ENCODE measurements at regions of chr6 and their contacts with region 1.

Region 1: DNA sequence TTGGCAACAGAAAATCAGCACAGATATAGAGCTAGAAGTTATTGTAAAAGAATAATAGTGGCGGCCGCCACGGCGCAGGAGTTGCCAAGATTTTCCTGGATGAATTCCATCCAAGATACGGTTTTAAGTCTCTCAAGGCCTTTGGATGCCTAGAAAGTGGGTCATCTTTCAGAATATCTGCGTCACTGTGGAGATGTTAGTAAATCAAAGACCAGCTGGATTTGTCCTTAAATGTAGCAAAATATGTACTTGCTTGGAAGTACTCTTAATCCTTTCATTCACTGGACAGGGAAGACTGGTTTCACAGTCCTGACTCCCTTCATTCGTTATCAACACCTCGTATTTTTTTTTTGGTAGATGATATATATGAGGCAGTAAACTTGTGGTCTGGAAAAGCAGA is 83.0 kb downstream of the SLC22A3 start:
- DNase-seq: peak; percentile 88
- H3K4me3 ChIP-seq: no peak overlapping the region
- H3K27ac ChIP-seq: peak overlapping the region; percentile 45 to 85 (median 74)
- H3K4me1 ChIP-seq: peaks cover 0 to 55% (median 49%) of the 10 kb centered on the region in 4 donors
- H3K27me3 ChIP-seq: no peaks in the 10 kb centered on the region
- CTCF ChIP-seq: no peak
- EP300 ChIP-seq: peak; percentile 69 to 95 (median 84)
- POLR2A ChIP-seq: no peak

Region 2: DNA sequence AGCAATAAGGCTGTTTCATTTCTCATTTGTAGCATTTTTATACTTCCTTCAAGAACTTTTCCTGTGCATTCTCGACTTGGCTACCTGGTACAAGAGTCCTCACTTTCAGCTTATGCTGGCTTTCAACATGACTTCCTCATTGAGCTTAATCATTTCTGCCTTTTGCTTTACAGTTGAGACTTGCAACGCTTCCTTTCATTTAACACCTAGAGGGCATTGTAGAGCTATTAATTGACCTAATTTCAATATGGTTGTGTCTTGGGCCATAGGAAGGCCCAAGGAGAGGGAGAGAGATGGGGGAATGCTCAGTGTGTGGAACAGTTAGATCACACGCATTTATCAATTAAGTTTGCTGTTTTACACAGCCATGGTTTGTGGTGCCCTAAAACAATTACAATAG is 209.8 kb before region 1 on chr6:
- intact Hi-C with region 1: loop called (anchors 10 kb)
- DNase-seq: no peak
- H3K4me3 ChIP-seq: no peak overlapping the region
- H3K27ac ChIP-seq: no peak overlapping the region
- H3K4me1 ChIP-seq: peaks cover 0 to 13% (median 6%) of the 10 kb centered on the region in 4 donors
- H3K27me3 ChIP-seq: no peaks in the 10 kb centered on the region
- CTCF ChIP-seq: peak in 2 of 4 experiments; percentile 12 to 18
- EP300 ChIP-seq: no peak
- POLR2A ChIP-seq: no peak

Region 3: DNA sequence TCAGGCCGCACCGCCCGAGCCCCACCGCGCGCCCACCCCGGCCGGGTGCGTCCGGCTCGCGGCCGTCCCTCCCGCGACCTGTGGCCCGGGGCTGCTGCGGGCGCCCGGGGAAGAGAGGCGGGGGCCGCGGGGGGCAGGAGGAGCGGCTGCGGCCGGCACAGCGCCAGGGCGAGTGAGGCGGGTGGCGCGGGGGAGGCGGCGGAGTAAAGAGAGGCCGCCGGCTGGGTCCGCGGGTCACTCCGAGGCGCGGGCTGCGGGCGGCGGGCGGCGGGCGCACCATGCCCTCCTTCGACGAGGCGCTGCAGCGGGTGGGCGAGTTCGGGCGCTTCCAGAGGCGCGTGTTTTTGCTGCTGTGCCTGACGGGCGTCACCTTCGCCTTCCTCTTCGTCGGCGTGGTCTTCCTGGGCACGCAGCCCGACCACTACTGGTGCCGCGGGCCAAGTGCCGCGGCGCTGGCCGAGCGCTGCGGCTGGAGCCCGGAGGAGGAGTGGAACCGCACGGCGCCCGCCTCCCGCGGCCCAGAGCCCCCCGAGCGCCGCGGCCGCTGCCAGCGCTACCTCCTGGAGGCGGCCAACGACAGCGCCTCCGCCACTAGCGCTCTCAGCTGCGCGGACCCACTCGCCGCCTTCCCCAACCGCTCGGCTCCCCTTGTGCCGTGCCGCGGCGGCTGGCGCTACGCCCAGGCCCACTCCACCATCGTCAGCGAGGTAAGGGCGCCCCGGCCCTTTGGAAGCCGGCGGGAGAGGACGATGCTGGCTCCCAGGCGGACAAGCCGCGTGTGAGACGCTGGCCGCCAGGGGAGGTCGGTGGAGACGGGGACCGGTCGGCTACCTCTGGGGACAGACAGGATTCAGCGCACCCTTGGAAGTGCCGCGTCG is 82.8 kb before region 1 on chr6 and contains the start of gene SLC22A3:
- intact Hi-C with region 1: loop called (anchors 5 kb)
- DNase-seq: peak; percentile 77
- H3K4me3 ChIP-seq: peak within 1 kb of the TSS; percentile 57 to 87 (median 74)
- H3K27ac ChIP-seq: peak within 1 kb of the TSS; percentile 81 to 89 (median 84)
- H3K4me1 ChIP-seq: peaks cover 0 to 29% (median 16%) of the 10 kb centered on the region in 4 donors
- H3K27me3 ChIP-seq: no peaks in the 10 kb centered on the region
- CTCF ChIP-seq: peak in 3 of 4 experiments; percentile 15 to 43 (median 42)
- EP300 ChIP-seq: no peak
- POLR2A ChIP-seq: no peak
- total RNA-seq, gene SLC22A3: 13.6 to 26.3 (median 19.3) TPM

Region 4: DNA sequence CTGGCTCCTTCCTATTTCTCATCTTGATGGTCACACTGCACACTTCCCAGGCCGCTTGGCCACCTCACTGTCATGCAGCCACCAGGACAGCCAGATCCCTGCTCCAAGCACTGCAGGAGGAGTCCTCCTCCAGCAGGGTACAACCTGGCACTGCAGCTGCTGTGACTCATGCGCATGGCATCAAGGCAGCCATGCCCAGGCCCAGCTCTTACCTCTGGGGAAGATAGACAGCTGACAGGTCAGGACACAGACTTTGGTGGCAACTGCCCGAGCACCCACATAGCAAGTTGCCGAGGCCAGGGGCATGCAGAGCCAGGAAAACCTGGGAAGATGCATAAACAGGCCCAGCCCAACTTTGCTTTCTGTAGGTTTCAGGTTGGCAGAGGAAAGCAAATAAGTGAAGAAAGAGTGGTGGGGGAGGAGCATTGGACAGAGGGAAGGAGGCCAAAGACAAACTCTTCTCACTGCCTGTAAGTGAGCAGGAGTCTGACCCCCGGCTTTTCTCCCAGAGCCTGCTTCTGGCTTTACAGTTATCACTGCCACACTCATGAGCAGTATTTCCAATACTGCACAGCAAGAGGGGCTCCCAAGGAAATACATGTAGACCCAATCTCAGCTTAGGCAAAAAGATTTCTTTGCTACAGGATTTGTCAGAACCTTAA is 44.2 kb before region 1 on chr6:
- intact Hi-C with region 1: loop called (anchors 1 kb)
- DNase-seq: peak; percentile 82
- H3K4me3 ChIP-seq: no peak overlapping the region
- H3K27ac ChIP-seq: peak overlapping the region; percentile 2 to 54 (median 30)
- H3K4me1 ChIP-seq: peaks cover 0 to 32% (median 19%) of the 10 kb centered on the region in 4 donors
- H3K27me3 ChIP-seq: no peaks in the 10 kb centered on the region
- CTCF ChIP-seq: no peak
- EP300 ChIP-seq: no peak
- POLR2A ChIP-seq: no peak